ENCODE measurements at regions of chr1 and their contacts with region 1.

Region 1: GRCh38 chr1:176374967-176375569 is 87.9 kb upstream of the PAPPA2 start:
- DNase-seq: peak; percentile 62
- H3K4me3 ChIP-seq: no peak overlapping the region
- H3K27ac ChIP-seq: no peak overlapping the region
- H3K4me1 ChIP-seq: no peaks in the 10 kb centered on the region
- H3K27me3 ChIP-seq: no peaks in the 10 kb centered on the region
- CTCF ChIP-seq: peak; percentile 81 to 83
- POLR2A ChIP-seq: no peak

Region 2: GRCh38 chr1:176241385-176242015 is 133.6 kb before region 1 on chr1:
- CTCF ChIA-PET with region 1: no interaction called
- POLR2A ChIA-PET with region 1: no interaction called
- dilution Hi-C with region 1: no loop called
- intact Hi-C with region 1: loop called (anchors 10 kb)
- DNase-seq: peak; percentile 24
- H3K4me3 ChIP-seq: no peak overlapping the region
- H3K27ac ChIP-seq: no peak overlapping the region
- H3K4me1 ChIP-seq: no peaks in the 10 kb centered on the region
- H3K27me3 ChIP-seq: no peaks in the 10 kb centered on the region
- CTCF ChIP-seq: no peak
- POLR2A ChIP-seq: no peak

Region 3: DNA sequence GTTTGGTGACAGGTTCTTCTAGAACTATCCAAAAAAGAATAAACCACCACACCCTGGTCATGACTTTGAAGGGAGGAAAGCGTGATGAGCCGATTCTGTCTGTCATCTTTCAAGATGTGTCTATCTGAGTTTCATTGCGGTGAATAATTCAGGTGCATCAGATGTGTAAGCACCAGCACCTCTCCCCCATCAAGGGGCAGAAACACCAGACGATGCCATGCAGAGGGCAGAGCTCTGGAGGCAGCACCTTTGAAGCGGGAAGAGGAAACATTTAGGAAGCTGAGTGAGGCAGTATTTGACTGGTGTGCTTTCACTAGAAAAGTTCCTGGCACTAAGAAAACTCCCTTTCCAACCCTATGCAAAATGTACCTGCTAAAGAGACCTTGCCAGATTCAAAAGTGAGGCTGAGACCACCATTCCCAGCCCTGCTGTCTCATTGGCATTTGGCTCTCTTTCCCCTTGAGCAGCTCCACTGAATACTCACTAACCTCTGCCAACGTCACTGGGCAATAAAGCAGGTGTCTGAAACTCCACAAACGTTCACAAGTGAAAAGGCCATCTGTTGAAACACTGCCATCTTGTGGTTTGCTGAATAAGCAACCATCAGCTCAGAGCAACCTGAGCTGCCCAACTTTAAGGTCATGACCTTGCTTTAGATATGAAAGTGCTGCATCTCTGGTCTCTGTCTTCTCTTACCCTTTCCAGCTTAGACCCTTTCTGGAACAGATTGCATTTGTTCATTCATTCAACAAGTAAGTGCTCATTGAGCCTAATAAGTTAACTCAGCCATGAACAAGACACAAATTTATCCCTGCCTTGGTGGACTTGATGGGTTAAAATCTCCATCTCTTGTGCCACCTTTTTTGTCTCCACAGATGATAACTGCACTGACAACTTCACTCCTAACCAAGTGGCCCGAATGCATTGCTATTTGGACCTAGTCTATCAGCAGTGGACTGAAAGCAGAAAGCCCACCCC is 316.5 kb after region 1 on chr1:
- CTCF ChIA-PET with region 1: no interaction called
- POLR2A ChIA-PET with region 1: no interaction called
- dilution Hi-C with region 1: no loop called
- intact Hi-C with region 1: loop called (anchors 2 kb)
- DNase-seq: peak; percentile 3
- H3K4me3 ChIP-seq: no peak overlapping the region
- H3K27ac ChIP-seq: no peak overlapping the region
- H3K4me1 ChIP-seq: no peaks in the 10 kb centered on the region
- H3K27me3 ChIP-seq: no peaks in the 10 kb centered on the region
- CTCF ChIP-seq: peak; percentile 34 to 36
- POLR2A ChIP-seq: no peak

Region 4: GRCh38 chr1:176880954-176881595 is 506.0 kb after region 1 on chr1:
- CTCF ChIA-PET with region 1: interaction called, 44 read pairs
- POLR2A ChIA-PET with region 1: no interaction called
- dilution Hi-C with region 1: no loop called
- intact Hi-C with region 1: loop called (anchors 1 kb)
- DNase-seq: peak; percentile 46
- H3K4me3 ChIP-seq: no peak overlapping the region
- H3K27ac ChIP-seq: no peak overlapping the region
- H3K4me1 ChIP-seq: no peaks in the 10 kb centered on the region
- H3K27me3 ChIP-seq: no peaks in the 10 kb centered on the region
- CTCF ChIP-seq: peak; percentile 79
- POLR2A ChIP-seq: no peak